CD4-positive, alpha-beta memory T cell (primary cell): ENCODE measurements at regions of chr17 and their contacts with region 1.

Region 1: GRCh38 chr17:50853015-50853615 is 13.0 kb downstream of the TOB1 start:
- DNase-seq: no peak
- H3K4me3 ChIP-seq: no peak overlapping the region
- H3K4me3 Mint-ChIP-seq: peak overlapping the region in 6 of 8 donors; percentile 70 to 87 (median 84)
- H3K27ac ChIP-seq: no peak overlapping the region
- H3K27ac Mint-ChIP-seq: peak overlapping the region; percentile 47 to 97 (median 92)
- H3K4me1 ChIP-seq: peaks cover 15% of the 10 kb centered on the region
- H3K4me1 Mint-ChIP-seq: peaks cover 12 to 20% (median 15%) of the 10 kb centered on the region in 4 donors
- H3K27me3 ChIP-seq: no peaks in the 10 kb centered on the region
- H3K27me3 Mint-ChIP-seq: no peaks in the 10 kb centered on the region

Region 2: GRCh38 chr17:50719144-50719923 is 133.8 kb before region 1 on chr17 and contains the start of gene LUC7L3:
- CTCF ChIA-PET with region 1: no interaction called
- POLR2A ChIA-PET with region 1: no interaction called
- intact Hi-C with region 1: no loop called
- DNase-seq: peak; percentile 91 to 96 (median 93)
- H3K4me3 ChIP-seq: peak within 1 kb of the TSS; percentile 55 to 100
- H3K4me3 Mint-ChIP-seq: peak within 1 kb of the TSS; percentile 86 to 99 (median 98)
- H3K27ac ChIP-seq: peak within 1 kb of the TSS; percentile 97
- H3K27ac Mint-ChIP-seq: peak within 1 kb of the TSS; percentile 78 to 99 (median 99)
- H3K4me1 ChIP-seq: peaks cover 42% of the 10 kb centered on the region
- H3K4me1 Mint-ChIP-seq: peaks cover 17 to 44% (median 32%) of the 10 kb centered on the region in 4 donors
- H3K27me3 ChIP-seq: no peaks in the 10 kb centered on the region
- H3K27me3 Mint-ChIP-seq: no peaks in the 10 kb centered on the region
- total RNA-seq, gene LUC7L3: 254 to 291 TPM

Region 3: GRCh38 chr17:50841949-50842354 is 11.2 kb before region 1 on chr17:
- CTCF ChIA-PET with region 1: interaction called, 26 read pairs
- POLR2A ChIA-PET with region 1: no interaction called
- intact Hi-C with region 1: no loop called
- DNase-seq: peak in 4 of 5 donors; percentile 42 to 46 (median 44)
- H3K4me3 ChIP-seq: no peak overlapping the region
- H3K4me3 Mint-ChIP-seq: no peak overlapping the region
- H3K27ac ChIP-seq: no peak overlapping the region
- H3K27ac Mint-ChIP-seq: peak overlapping the region in 2 of 7 donors; percentile 32 to 48
- H3K4me1 ChIP-seq: no peaks in the 10 kb centered on the region
- H3K4me1 Mint-ChIP-seq: peaks cover 0 to 5% (median 3%) of the 10 kb centered on the region in 4 donors
- H3K27me3 ChIP-seq: no peaks in the 10 kb centered on the region
- H3K27me3 Mint-ChIP-seq: peaks cover 2% of the 10 kb centered on the region in 2 donors

Region 4: GRCh38 chr17:50883850-50884438 is 30.8 kb after region 1 on chr17:
- CTCF ChIA-PET with region 1: interaction called, 13 read pairs
- POLR2A ChIA-PET with region 1: interaction called, 8 read pairs
- intact Hi-C with region 1: no loop called
- DNase-seq: no peak
- H3K4me3 ChIP-seq: no peak overlapping the region
- H3K4me3 Mint-ChIP-seq: peak overlapping the region in 1 of 8 donors; percentile 25
- H3K27ac ChIP-seq: no peak overlapping the region
- H3K27ac Mint-ChIP-seq: peak overlapping the region in 5 of 7 donors; percentile 14 to 88 (median 71)
- H3K4me1 ChIP-seq: peaks cover 27% of the 10 kb centered on the region
- H3K4me1 Mint-ChIP-seq: peaks cover 26 to 44% (median 31%) of the 10 kb centered on the region in 4 donors
- H3K27me3 ChIP-seq: no peaks in the 10 kb centered on the region
- H3K27me3 Mint-ChIP-seq: no peaks in the 10 kb centered on the region

Region 5: DNA sequence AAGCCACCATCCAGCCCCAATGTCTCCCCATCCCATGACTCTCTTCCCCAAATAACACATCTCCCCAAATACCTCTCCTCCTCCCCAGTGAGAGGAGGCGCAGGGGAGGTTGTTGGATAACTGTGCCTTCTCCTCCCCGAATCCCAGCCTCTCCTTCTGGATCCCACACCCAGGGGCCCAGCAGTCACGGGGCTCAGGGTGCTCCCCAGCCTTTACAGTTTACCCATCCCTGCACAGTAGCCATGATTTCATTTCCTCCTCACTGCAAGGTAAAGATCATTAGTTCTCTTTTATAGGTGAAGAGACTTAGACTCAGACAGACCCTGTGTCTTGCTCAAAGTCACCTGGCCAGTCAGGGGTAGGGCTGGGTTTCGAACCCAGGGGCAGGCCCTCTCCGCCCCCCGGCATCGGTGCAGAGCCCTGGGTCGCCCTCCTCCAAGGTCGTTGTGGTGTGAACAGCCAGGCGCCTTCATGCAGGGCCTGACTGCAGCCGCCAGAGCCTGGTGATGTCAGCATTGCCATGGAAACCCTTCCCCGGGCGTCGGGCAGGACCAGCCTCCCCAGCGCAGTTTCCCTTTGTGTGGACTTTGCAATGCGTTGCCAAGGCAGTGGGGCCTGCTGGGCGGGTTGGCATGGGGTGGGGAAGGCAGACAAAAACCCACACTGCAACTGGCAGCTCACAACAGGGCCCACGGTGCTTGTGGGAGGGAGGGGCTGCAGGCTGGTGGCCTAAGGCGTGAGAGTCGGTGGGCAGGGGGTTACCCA is 66.4 kb after region 1 on chr17:
- CTCF ChIA-PET with region 1: interaction called, 14 read pairs
- POLR2A ChIA-PET with region 1: interaction called, 688 read pairs
- intact Hi-C with region 1: no loop called
- DNase-seq: peak; percentile 86 to 97 (median 92)
- H3K4me3 ChIP-seq: peak overlapping the region; percentile 14 to 27
- H3K4me3 Mint-ChIP-seq: peak overlapping the region; percentile 50 to 89 (median 75)
- H3K27ac ChIP-seq: peak overlapping the region; percentile 75
- H3K27ac Mint-ChIP-seq: peak overlapping the region; percentile 97 to 99 (median 99)
- H3K4me1 ChIP-seq: peaks cover 39% of the 10 kb centered on the region
- H3K4me1 Mint-ChIP-seq: peaks cover 15 to 56% (median 38%) of the 10 kb centered on the region in 4 donors
- H3K27me3 ChIP-seq: no peaks in the 10 kb centered on the region
- H3K27me3 Mint-ChIP-seq: no peaks in the 10 kb centered on the region

Region 6: DNA sequence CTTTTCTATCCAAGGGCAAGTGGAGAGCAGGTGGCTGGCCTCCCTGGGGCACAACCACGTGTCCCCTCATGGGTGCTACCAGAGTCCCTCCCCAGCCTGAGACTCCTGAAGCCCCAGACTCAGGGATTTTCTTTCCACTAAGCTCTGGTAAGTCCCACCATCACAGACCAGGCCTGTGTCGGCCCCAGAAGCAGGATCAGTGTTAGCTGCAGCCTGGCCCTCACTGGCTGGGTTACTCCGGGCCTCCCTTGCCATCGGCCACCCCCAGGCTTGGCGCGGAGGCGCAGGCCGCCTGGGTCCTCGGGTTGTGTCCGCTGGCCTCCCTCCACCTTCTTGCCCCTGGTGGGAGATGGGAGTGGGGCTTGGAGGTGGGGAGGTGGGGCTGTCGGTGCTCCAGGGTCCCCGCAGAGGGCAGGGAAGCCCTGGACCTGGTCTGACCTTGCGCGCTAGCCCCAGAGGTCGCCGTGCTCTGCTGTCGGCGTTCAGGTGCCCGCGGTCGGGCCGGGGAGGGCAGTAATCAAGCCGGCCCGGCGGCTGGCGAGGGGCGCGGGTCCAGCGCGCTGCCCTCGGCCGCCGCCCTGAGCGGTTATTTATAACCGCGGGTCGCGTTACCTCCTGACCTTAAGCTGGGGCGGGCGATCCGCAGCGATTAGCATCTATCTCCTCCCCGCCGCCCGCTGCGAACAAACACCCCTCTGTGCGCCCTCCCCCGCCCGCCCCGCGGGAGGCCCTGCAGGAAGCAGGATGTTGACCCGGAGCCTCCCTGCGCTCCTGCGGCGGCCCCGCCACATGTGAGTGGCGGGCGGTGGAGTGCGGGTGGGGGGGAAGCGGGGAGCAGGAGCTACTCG is 91.2 kb after region 1 on chr17:
- CTCF ChIA-PET with region 1: interaction called, 515 read pairs
- POLR2A ChIA-PET with region 1: interaction called, 673 read pairs
- intact Hi-C with region 1: no loop called
- DNase-seq: peak; percentile 73 to 82 (median 76)
- H3K4me3 ChIP-seq: peak overlapping the region; percentile 46 to 49
- H3K4me3 Mint-ChIP-seq: peak overlapping the region; percentile 79 to 88 (median 84)
- H3K27ac ChIP-seq: peak overlapping the region; percentile 73
- H3K27ac Mint-ChIP-seq: peak overlapping the region; percentile 87 to 94 (median 93)
- H3K4me1 ChIP-seq: peaks cover 40% of the 10 kb centered on the region
- H3K4me1 Mint-ChIP-seq: peaks cover 21 to 52% (median 36%) of the 10 kb centered on the region in 4 donors
- H3K27me3 ChIP-seq: no peaks in the 10 kb centered on the region
- H3K27me3 Mint-ChIP-seq: no peaks in the 10 kb centered on the region

Region 7: DNA sequence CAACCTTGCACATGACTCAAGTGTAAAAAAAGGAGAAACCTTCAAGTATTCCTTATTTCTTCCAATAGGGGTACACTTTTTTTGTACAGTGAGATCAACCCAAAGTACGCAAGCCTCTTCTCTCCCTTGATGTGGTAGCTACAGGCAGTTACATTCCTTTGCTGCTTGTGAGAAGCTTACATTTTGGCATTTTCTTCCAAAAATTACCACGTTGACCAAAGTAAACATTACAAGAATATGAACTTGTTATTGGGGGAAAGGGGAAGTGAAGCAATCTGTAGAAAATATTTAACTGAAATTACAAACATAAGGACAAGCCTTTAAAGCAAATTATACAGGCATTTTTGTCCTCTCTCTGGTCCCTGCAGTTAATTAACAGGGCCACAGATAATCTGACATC is 110.0 kb after region 1 on chr17:
- CTCF ChIA-PET with region 1: interaction called, 515 read pairs
- POLR2A ChIA-PET with region 1: interaction called, 673 read pairs
- intact Hi-C with region 1: no loop called
- DNase-seq: no peak
- H3K4me3 ChIP-seq: no peak overlapping the region
- H3K4me3 Mint-ChIP-seq: no peak overlapping the region
- H3K27ac ChIP-seq: no peak overlapping the region
- H3K27ac Mint-ChIP-seq: peak overlapping the region in 1 of 7 donors; percentile 70
- H3K4me1 ChIP-seq: no peaks in the 10 kb centered on the region
- H3K4me1 Mint-ChIP-seq: peaks cover 0 to 11% (median 8%) of the 10 kb centered on the region in 4 donors
- H3K27me3 ChIP-seq: no peaks in the 10 kb centered on the region
- H3K27me3 Mint-ChIP-seq: no peaks in the 10 kb centered on the region

Region 8: DNA sequence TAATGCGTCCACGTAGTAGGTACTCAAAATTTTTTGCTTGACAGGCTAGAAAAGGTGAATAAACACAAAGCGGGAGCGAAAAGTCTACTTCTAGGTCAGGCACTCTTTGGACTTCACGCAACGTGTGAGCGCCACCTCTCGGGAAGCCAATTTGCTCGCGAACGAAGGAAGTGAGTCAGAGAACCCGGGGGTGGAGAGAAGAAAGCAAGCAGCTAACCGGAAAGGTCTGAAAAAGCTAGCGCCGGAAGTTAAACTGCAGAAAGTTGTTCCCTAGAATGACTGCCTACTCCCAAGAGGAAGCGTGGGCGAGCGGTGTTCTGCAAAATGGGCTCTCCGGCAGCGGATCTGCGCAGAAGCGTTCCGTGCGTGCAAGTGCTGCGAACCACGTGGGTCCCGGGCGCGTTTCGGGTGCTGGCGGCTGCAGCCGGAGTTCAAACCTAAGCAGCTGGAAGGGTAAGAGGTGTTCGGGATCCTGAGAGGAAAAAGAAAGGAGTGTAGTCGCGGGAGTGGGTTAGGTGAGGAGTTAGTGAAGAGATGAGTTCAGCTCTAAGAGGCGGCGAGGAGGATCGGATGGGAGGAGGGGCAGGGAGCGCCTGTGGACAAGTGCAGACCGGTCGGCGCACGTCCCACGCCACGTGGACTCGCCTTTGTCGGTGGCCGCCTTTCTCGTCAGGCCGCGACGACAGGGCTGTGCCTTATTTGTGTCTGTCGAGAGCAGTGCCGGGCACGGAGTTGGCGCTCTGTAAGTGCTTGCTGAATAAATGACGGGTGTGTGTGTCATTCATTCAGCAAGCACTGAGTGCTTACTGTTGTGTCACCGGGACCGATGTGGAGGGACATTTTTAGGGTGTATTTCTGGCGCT is 300.3 kb after region 1 on chr17 and contains the start of gene NME1:
- CTCF ChIA-PET with region 1: interaction called, 7 read pairs
- POLR2A ChIA-PET with region 1: no interaction called
- intact Hi-C with region 1: loop called (anchors 1 kb)
- DNase-seq: peak; percentile 98 to 99 (median 98)
- H3K4me3 ChIP-seq: peak within 1 kb of the TSS; percentile 77 to 85
- H3K4me3 Mint-ChIP-seq: no peak within 1 kb of the TSS
- H3K27ac ChIP-seq: peak within 1 kb of the TSS; percentile 61
- H3K27ac Mint-ChIP-seq: no peak within 1 kb of the TSS
- H3K4me1 ChIP-seq: peaks cover 21% of the 10 kb centered on the region
- H3K4me1 Mint-ChIP-seq: peaks cover 0 to 7% (median 2%) of the 10 kb centered on the region in 4 donors
- H3K27me3 ChIP-seq: no peaks in the 10 kb centered on the region
- H3K27me3 Mint-ChIP-seq: peaks cover 0 to 1% of the 10 kb centered on the region in 2 donors
- total RNA-seq, gene NME1: 10.0 to 12.2 TPM